Activated CD4-positive, alpha-beta memory T cell treated with anti-CD3 and anti-CD28 coated beads for 36 hours (primary cell): ENCODE measurements at regions of chr6 and their contacts with region 1.

Region 1: GRCh38 chr6:137165375-137166246 is 7.8 kb downstream of the IL22RA2 start:
- DNase-seq: peak; percentile 69
- H3K4me3 Mint-ChIP-seq: no peak overlapping the region
- H3K27ac Mint-ChIP-seq: no peak overlapping the region
- H3K4me1 Mint-ChIP-seq: peaks cover 32% of the 10 kb centered on the region
- H3K27me3 Mint-ChIP-seq: peaks cover 34% of the 10 kb centered on the region

Region 2: DNA sequence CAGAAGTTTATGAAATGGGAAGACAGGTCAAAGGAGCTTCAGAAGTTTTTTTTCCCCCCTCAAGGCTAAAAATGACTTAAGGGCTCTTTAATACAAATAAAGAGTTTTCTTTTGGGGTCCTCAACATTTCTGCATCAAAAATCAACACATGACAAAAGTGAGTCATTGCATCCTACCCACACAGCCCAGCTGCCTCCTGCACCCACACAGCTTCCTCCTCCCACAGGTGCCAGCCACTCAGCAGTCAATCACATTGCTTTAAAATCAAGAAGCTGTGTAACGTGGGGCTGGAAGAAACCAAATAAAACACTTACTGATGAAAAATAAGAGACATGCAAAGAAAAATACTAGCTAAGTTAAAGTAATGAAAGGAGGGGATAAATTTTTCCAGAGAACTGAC is 441.8 kb before region 1 on chr6:
- CTCF ChIA-PET with region 1: no interaction called
- POLR2A ChIA-PET with region 1: no interaction called
- intact Hi-C with region 1: no loop called
- DNase-seq: peak; percentile 59
- H3K4me3 Mint-ChIP-seq: no peak overlapping the region
- H3K27ac Mint-ChIP-seq: peak overlapping the region; percentile 12
- H3K4me1 Mint-ChIP-seq: peaks cover 49% of the 10 kb centered on the region
- H3K27me3 Mint-ChIP-seq: no peaks in the 10 kb centered on the region

Region 3: DNA sequence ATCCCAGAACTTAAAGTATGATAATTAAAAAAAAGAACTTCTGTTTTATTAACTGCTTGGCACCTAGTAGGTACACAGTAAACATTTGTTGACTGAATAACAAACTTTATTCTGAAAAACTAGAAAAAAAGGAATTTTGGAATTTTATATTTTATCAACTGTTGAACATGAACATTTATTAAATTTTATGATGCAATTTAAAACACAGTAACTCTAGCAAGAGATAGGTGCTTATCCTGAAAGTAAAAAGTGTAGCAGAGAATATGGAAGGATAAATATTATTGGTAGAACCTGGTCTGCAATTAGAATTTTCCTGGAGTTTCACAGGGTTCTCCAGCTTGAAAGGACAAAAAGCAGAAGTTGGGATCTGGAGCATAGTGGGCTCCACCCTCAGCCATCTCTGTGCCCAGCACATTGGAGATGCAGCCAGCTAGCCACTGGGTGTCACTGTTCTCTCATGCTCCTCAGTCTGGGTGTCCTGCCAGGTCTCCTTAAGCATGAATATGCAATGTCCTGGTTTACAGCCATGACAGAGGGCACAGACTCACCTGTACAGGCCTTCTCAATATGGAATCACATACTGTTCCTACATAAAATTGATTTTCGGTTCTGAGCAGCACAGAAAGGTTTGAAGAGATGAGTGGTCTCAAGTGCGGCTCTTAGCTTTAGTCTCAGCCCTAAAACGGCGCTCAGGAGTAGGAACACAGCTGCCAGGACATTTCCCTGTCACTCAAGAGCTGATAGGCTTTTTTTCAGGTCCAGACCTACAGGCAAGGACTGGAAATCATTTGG is 89.1 kb before region 1 on chr6:
- CTCF ChIA-PET with region 1: interaction called, 14 read pairs
- POLR2A ChIA-PET with region 1: no interaction called
- intact Hi-C with region 1: no loop called
- DNase-seq: peak; percentile 76
- H3K4me3 Mint-ChIP-seq: no peak overlapping the region
- H3K27ac Mint-ChIP-seq: no peak overlapping the region
- H3K4me1 Mint-ChIP-seq: no peaks in the 10 kb centered on the region
- H3K27me3 Mint-ChIP-seq: peaks cover 17% of the 10 kb centered on the region

Region 4: GRCh38 chr6:137094411-137095008 is 71.1 kb before region 1 on chr6:
- CTCF ChIA-PET with region 1: interaction called, 58 read pairs
- POLR2A ChIA-PET with region 1: interaction called, 3 read pairs
- intact Hi-C with region 1: loop called (anchors 1 kb)
- DNase-seq: peak; percentile 68
- H3K4me3 Mint-ChIP-seq: no peak overlapping the region
- H3K27ac Mint-ChIP-seq: no peak overlapping the region
- H3K4me1 Mint-ChIP-seq: peaks cover 22% of the 10 kb centered on the region
- H3K27me3 Mint-ChIP-seq: peaks cover 2% of the 10 kb centered on the region

Region 5: GRCh38 chr6:137126875-137127485 is 38.6 kb before region 1 on chr6:
- CTCF ChIA-PET with region 1: no interaction called
- POLR2A ChIA-PET with region 1: no interaction called
- intact Hi-C with region 1: no loop called
- DNase-seq: no peak
- H3K4me3 Mint-ChIP-seq: no peak overlapping the region
- H3K27ac Mint-ChIP-seq: no peak overlapping the region
- H3K4me1 Mint-ChIP-seq: no peaks in the 10 kb centered on the region
- H3K27me3 Mint-ChIP-seq: peaks cover 13% of the 10 kb centered on the region

Region 6: DNA sequence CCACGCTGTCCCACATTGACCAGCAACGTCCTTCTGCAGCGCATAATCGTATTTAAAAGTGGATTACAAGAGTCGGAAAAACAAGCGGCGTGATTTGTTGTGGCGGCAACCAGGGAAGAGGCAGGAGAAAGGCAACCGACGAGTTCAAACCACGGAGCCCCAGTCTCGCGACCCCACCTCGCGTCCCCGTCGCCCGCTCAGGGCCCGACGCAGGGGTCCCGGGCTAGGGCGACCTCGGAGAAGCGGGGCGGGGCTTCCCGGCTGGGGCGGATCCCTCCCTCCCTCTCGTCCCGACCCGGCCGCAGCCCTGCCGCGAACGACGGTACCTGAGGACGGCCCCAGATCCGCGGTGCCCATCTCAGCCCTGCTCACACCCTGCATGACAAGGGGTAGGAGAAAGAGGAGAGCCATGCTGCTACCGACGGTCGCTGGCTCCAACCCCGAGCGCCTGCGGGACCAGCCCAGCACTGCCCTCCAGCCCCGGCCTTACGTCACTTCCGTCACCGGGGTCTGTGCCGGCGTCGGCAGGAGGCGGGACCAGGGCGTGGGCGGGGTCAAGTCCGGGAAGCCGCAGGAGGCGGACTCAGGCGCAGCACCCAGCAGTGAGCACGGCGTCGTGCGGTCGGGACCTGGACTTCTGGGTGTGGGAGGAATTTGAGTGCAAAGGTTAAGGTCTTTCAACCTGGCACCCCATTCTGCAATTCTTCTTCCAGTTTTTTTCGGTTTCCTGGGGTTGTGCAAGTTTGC is 53.5 kb after region 1 on chr6 and contains the start of gene IFNGR1:
- CTCF ChIA-PET with region 1: interaction called, 4 read pairs
- POLR2A ChIA-PET with region 1: no interaction called
- intact Hi-C with region 1: loop called (anchors 1 kb)
- DNase-seq: peak; percentile 98
- H3K4me3 Mint-ChIP-seq: peak within 1 kb of the TSS; percentile 92
- H3K27ac Mint-ChIP-seq: peak within 1 kb of the TSS; percentile 97
- H3K4me1 Mint-ChIP-seq: peaks cover 45% of the 10 kb centered on the region
- H3K27me3 Mint-ChIP-seq: no peaks in the 10 kb centered on the region
- total RNA-seq, gene IFNGR1: 27.7 to 29.0 TPM

Region 7: DNA sequence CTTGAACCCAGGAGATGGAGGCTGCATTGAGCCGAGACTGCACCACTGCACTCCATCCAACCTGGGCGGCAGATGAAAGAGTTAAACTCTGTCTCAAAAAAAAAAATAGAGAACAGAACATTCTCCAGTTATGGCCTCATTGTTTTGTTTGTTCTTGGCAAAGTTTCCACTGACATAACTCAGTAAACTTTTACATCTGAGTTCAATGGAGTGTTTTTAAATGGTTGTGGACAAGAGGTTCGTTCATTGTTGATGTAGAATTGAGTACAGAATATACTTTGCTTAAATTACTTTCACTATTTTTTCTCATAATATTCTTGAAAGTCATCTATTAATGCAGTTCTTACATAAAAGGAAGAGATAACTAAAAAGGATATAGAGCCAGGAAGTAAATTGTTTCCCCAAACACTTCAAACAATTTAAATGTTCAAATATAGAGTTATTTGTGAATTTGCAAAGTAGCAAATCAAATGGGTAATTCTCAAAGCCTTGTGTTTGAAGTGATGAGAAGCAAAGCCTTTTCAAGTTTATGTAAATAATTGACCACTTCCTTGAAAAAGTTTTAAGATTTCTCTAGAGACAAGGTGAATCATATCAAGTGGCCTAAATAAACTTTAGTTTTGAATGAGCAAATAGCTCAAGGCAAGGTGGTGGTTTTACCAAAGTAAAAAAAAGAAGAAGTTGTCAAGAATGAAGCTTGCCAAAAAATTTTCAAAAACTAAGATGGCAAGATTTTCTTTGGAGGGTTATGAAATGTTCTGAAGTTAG is 96.0 kb after region 1 on chr6:
- CTCF ChIA-PET with region 1: no interaction called
- POLR2A ChIA-PET with region 1: no interaction called
- intact Hi-C with region 1: loop called (anchors 5 kb)
- DNase-seq: no peak
- H3K4me3 Mint-ChIP-seq: no peak overlapping the region
- H3K27ac Mint-ChIP-seq: no peak overlapping the region
- H3K4me1 Mint-ChIP-seq: peaks cover 8% of the 10 kb centered on the region
- H3K27me3 Mint-ChIP-seq: peaks cover 2% of the 10 kb centered on the region